ENCODE measurements at regions of chr12 and their contacts with region 1.

Region 1: GRCh38 chr12:83005534-83006197 is 319.0 kb downstream of the TMTC2 start:
- DNase-seq: no peak
- ATAC-seq: no peak
- H3K4me3 ChIP-seq: no peak overlapping the region
- H3K27ac ChIP-seq: no peak overlapping the region
- H3K4me1 ChIP-seq: peaks cover 8% of the 10 kb centered on the region; the same call in 1 of the 2 replicates
- H3K27me3 ChIP-seq: no peaks in the 10 kb centered on the region
- CTCF ChIP-seq: no peak

Region 2: GRCh38 chr12:83031196-83031595 is 25.5 kb after region 1 on chr12:
- CTCF ChIA-PET with region 1: no interaction called
- POLR2A ChIA-PET with region 1: no interaction called
- intact Hi-C with region 1: no loop called
- DNase-seq: no peak
- ATAC-seq: no peak
- H3K4me3 ChIP-seq: no peak overlapping the region
- H3K27ac ChIP-seq: no peak overlapping the region
- H3K4me1 ChIP-seq: no peaks in the 10 kb centered on the region
- H3K27me3 ChIP-seq: no peaks in the 10 kb centered on the region
- CTCF ChIP-seq: no peak

Region 3: DNA sequence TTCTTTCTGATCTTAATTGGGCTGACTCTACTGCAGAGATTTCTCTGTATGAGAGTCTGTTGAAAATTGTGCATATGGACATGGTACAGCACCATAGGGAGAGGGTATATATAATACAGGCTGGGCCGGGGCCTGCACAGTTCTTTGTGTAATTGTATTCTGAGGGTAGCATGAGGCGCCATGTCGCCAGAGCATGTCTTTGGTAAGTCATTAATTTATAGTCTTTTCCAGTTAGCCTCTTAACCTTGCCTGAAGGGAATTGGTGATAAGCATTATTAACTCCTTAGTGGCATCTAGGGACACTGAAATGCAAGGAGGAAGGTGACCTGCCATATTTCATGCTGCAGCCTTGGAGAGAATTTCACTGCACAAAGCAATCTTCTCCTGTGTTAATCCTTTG is 250.9 kb after region 1 on chr12:
- CTCF ChIA-PET with region 1: interaction called, 14 read pairs
- POLR2A ChIA-PET with region 1: no interaction called
- intact Hi-C with region 1: no loop called
- DNase-seq: no peak
- ATAC-seq: no peak
- H3K4me3 ChIP-seq: no peak overlapping the region
- H3K27ac ChIP-seq: no peak overlapping the region
- H3K4me1 ChIP-seq: no peaks in the 10 kb centered on the region
- H3K27me3 ChIP-seq: no peaks in the 10 kb centered on the region
- CTCF ChIP-seq: no peak

Region 4: DNA sequence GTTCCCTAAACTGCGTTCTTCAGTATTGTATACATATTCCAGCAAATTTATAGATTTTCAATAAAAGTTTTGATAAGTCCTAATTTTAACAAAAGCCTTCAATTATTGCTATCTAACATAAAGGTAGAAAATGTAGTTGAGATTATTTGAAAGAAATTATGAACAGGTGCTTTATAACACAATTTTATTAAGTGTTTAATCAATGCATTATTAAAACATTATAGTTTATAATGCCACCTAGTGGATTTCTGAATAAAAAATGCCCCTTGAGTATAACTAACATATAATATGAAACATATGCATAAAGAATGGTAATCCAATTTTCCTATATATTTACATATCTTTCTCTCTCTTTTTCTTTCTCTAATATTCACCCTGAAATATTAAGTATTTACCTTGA is 1391.6 kb after region 1 on chr12:
- CTCF ChIA-PET with region 1: no interaction called
- POLR2A ChIA-PET with region 1: no interaction called
- intact Hi-C with region 1: loop called (anchors 5 kb)
- DNase-seq: peak; percentile 56
- ATAC-seq: no peak
- H3K4me3 ChIP-seq: no peak overlapping the region
- H3K27ac ChIP-seq: no peak overlapping the region
- H3K4me1 ChIP-seq: no peaks in the 10 kb centered on the region
- H3K27me3 ChIP-seq: no peaks in the 10 kb centered on the region
- CTCF ChIP-seq: peak; percentile 70

Measured in PC-3 (cell line).